RWPE1 (cell line): ENCODE measurements at regions of chr4 and their contacts with region 1.

Region 1: GRCh38 chr4:38069271-38069760 is 109.1 kb downstream of the PTTG2 start:
- DNase-seq: peak; percentile 64
- H3K27ac ChIP-seq: peak overlapping the region; percentile 55
- CTCF ChIP-seq: peak; percentile 44

Region 2: DNA sequence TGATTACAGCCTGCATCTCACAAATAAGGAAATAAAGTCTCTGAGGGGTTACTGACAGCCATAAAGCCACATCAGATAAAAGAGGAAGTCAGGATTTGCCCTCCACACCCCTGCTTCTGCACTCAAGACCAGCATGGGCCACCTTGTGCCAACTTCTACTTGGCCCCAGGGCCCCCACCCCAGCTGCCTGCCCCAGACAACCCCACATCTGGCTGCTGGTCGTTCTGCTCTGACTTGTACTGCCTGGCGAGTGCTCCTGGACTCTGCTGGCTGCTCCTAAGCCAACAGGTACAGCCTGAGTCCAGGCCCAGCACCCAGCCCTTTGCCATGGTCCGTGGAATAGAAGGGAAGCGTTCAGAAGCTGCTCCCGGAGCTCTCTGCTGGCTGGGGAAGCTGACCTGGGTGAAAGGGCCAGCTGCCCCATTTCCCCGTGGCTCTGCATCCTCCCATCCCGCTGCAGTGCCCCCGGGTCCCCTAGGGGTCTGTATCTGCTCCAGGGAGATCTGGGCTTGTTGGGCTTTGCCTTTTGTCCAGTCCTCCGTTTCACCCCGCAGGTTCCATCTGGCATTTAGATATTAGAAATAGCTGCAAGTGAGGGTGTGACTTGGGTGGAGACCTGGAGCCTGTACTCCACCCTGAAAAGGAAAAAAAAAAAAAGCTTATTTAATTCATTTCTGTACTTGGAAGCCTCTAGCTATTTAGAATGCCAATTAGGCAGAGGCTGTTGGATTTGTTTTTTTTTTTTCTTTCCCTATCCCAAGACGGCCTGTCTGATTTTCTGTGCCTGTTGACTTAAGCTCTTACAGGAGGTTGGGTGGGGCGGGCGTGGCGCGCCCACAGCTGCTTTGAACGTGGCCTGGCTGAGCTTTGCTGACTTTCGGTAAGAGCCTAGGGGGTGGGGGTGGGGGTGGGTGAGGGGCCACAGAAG is 85.6 kb after region 1 on chr4:
- CTCF ChIA-PET with region 1: interaction called, 12 read pairs
- POLR2A ChIA-PET with region 1: no interaction called
- DNase-seq: peak; percentile 35
- H3K27ac ChIP-seq: peak overlapping the region; percentile 100
- CTCF ChIP-seq: no peak

Region 3: DNA sequence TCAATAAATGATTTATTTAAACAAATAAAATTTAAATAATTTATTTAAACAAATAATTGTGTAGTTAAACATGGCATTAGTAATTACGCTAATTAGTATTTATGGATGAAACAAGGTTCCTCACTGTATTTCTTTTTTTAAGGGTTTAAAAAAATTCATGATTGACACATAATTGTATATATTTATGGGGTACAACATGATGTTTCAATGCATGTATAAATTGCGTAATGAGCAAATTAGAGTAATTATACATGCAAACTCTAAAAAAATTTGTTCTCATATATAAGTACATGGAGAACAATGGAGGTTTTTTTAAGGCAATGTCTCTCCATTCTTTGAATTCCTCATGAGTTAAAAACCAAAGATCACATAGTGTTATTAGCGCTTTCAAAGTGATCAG is 478.9 kb after region 1 on chr4:
- CTCF ChIA-PET with region 1: no interaction called
- POLR2A ChIA-PET with region 1: no interaction called
- DNase-seq: no peak
- H3K27ac ChIP-seq: no peak overlapping the region
- CTCF ChIP-seq: no peak